Naive thymus-derived CD4-positive, alpha-beta T cell (primary cell): ENCODE measurements at regions of chr3 and their contacts with region 1.

Region 1: DNA sequence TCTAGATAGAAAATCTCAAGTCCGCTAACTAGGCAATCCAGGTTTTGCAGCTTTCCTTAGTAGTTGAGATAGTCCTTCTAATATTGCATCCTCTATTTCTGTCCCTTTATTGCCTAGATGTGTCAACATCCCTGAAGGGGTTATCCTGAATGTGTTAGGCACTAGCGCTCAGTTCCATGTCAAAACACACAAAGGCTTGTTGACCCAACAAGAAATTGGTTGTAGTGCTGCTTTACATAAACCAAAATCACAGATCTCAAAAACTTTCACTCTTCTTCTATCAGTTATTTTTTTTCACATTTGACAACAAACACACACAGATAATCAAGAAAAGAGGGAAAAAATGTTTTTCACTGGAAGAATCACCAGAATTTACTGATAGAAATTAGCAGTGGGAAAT is 51.4 kb upstream of the SOX2 start:
- DNase-seq: no peak
- ATAC-seq: no peak
- H3K4me3 ChIP-seq: no peak overlapping the region
- H3K4me3 Mint-ChIP-seq: no peak overlapping the region
- H3K27ac ChIP-seq: no peak overlapping the region
- H3K27ac Mint-ChIP-seq: no peak overlapping the region
- H3K4me1 ChIP-seq: no peaks in the 10 kb centered on the region
- H3K4me1 Mint-ChIP-seq: no peaks in the 10 kb centered on the region
- H3K27me3 ChIP-seq: no peaks in the 10 kb centered on the region
- H3K27me3 Mint-ChIP-seq: peaks cover 0 to 13% (median 4%) of the 10 kb centered on the region in 5 donors

Region 2: GRCh38 chr3:180870008-180870699 is 790.2 kb before region 1 on chr3:
- CTCF ChIA-PET with region 1: no interaction called
- POLR2A ChIA-PET with region 1: no interaction called
- intact Hi-C with region 1: loop called in 1 of 2 experiments (anchors 5 kb)
- DNase-seq: no peak
- ATAC-seq: no peak
- H3K4me3 ChIP-seq: no peak overlapping the region
- H3K4me3 Mint-ChIP-seq: peak overlapping the region in 7 of 10 donors; percentile 8 to 65 (median 19)
- H3K27ac ChIP-seq: no peak overlapping the region
- H3K27ac Mint-ChIP-seq: no peak overlapping the region
- H3K4me1 ChIP-seq: no peaks in the 10 kb centered on the region
- H3K4me1 Mint-ChIP-seq: peaks cover 0 to 7% (median 5%) of the 10 kb centered on the region in 7 donors
- H3K27me3 ChIP-seq: no peaks in the 10 kb centered on the region
- H3K27me3 Mint-ChIP-seq: peaks cover 35 to 50% (median 41%) of the 10 kb centered on the region in 5 donors

Region 3: GRCh38 chr3:181761901-181762300 is 101.6 kb after region 1 on chr3:
- CTCF ChIA-PET with region 1: no interaction called
- POLR2A ChIA-PET with region 1: no interaction called
- intact Hi-C with region 1: no loop called
- DNase-seq: no peak
- ATAC-seq: no peak
- H3K4me3 ChIP-seq: no peak overlapping the region
- H3K4me3 Mint-ChIP-seq: no peak overlapping the region
- H3K27ac ChIP-seq: no peak overlapping the region
- H3K27ac Mint-ChIP-seq: no peak overlapping the region
- H3K4me1 ChIP-seq: no peaks in the 10 kb centered on the region
- H3K4me1 Mint-ChIP-seq: no peaks in the 10 kb centered on the region
- H3K27me3 ChIP-seq: no peaks in the 10 kb centered on the region
- H3K27me3 Mint-ChIP-seq: peaks cover 0 to 9% (median 6%) of the 10 kb centered on the region in 5 donors